ENCODE measurements at regions of chr17 and their contacts with region 1.

Region 1: DNA sequence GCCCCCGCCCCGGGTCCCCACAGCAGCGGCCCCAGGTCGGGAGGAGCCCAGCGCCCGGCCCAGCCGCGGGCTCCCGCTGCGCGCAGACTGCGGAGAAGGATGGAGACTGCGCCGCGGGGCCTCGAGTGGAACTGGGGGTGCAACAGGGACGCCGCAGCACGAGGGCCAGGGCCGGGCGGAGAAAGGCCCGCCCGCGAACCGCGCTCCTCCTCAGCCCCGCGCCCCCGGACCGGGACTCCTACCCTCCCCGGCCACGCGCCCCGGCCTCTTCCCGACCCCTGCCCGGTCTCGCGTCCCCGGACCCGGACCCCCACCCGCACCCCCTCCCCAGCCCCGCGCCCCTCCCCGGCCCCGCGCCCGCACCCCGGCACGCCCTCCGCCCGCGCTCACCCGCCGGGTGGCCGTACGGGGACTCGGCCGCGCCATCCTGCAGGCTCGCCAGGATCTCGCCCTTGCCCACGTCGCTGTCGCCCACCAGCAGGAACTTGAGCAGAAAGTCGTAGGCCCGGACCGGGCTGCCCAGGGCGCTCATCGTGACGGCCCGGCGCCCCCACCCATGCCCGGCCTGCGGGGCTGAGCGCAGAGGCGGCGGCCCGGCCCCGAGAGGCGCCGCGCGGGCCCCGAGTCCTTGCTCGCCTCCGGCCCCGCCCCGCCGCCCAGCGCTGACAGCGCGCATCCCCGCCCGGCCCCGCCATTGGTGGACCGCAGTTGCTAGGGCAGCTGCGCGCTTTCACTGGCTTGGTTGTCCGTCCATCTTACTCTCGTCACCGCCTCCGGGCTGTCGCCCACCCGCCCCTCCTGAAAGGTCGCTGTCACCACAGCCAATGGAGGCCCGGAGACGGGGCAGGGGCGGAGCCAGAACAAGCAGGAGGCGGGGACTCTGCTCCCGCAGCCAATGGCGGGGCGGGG is at the start of gene RAB40B:
- DNase-seq: peak; percentile 99
- H3K4me3 ChIP-seq: peak within 1 kb of the TSS; percentile 12 to 57
- H3K4me3 Mint-ChIP-seq: peak within 1 kb of the TSS; percentile 84 to 96 (median 90)
- H3K27ac ChIP-seq: peak within 1 kb of the TSS; percentile 6
- H3K27ac Mint-ChIP-seq: peak within 1 kb of the TSS; percentile 20 to 95 (median 77)
- H3K4me1 ChIP-seq: peaks cover 13% of the 10 kb centered on the region
- H3K4me1 Mint-ChIP-seq: peaks cover 4 to 15% (median 10%) of the 10 kb centered on the region in 4 donors
- H3K27me3 ChIP-seq: no peaks in the 10 kb centered on the region
- H3K27me3 Mint-ChIP-seq: no peaks in the 10 kb centered on the region
- total RNA-seq, gene RAB40B: 5.1 to 5.8 TPM

Region 2: GRCh38 chr17:82434216-82434565 is 264.1 kb before region 1 on chr17:
- CTCF ChIA-PET with region 1: no interaction called
- POLR2A ChIA-PET with region 1: no interaction called
- intact Hi-C with region 1: no loop called
- DNase-seq: peak in 1 of 5 donors; percentile 25
- H3K4me3 ChIP-seq: no peak overlapping the region
- H3K4me3 Mint-ChIP-seq: peak overlapping the region in 1 of 8 donors; percentile 22
- H3K27ac ChIP-seq: no peak overlapping the region
- H3K27ac Mint-ChIP-seq: peak overlapping the region in 2 of 7 donors; percentile 18 to 29
- H3K4me1 ChIP-seq: peaks cover 13% of the 10 kb centered on the region
- H3K4me1 Mint-ChIP-seq: peaks cover 8 to 26% (median 12%) of the 10 kb centered on the region in 4 donors
- H3K27me3 ChIP-seq: no peaks in the 10 kb centered on the region
- H3K27me3 Mint-ChIP-seq: no peaks in the 10 kb centered on the region

Region 3: DNA sequence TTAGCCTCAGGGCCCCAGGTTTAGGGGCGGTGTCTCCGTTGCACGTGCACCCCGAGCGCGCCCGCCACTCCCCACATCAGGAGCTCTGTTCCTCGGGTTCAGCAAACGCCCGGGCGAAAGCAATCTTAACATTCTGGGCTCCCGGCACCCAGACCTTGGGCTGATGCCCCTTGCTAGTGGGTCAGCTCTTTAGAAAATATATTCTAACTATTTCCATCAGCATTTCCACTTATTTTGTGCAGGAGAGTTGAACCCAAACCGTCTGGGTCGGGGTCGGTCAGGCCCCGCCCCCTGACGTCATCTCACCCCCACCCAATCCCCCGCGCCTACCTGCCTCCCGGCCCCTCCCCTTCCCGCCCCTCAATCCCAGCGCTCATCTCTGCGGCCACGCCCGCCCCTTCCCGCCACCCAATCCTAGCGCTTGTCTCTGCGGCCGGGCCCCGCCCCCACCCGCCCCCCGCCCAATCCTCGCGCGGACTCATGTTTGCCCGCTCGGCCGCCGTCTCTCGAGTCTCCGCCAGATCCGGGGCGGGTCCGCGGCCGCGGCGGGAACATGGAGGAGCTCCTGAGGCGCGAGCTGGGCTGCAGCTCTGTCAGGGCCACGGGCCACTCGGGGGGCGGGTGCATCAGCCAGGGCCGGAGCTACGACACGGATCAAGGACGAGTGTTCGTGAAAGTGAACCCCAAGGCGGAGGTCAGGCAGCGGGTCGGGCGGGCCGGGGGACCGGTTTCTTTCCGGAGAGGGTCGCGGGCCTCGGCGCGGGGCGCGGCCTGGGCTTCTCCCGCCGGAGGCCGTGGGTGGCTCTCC is 18.1 kb after region 1 on chr17 and contains the start of gene FN3KRP:
- CTCF ChIA-PET with region 1: no interaction called
- POLR2A ChIA-PET with region 1: interaction called, 5 read pairs
- intact Hi-C with region 1: loop called (anchors 1 kb)
- DNase-seq: peak; percentile 84 to 89 (median 87)
- H3K4me3 ChIP-seq: peak within 1 kb of the TSS; percentile 44 to 74
- H3K4me3 Mint-ChIP-seq: peak within 1 kb of the TSS; percentile 92 to 98 (median 96)
- H3K27ac ChIP-seq: peak within 1 kb of the TSS; percentile 66
- H3K27ac Mint-ChIP-seq: peak within 1 kb of the TSS; percentile 83 to 98 (median 95)
- H3K4me1 ChIP-seq: peaks cover 22% of the 10 kb centered on the region
- H3K4me1 Mint-ChIP-seq: peaks cover 11 to 33% (median 22%) of the 10 kb centered on the region in 4 donors
- H3K27me3 ChIP-seq: no peaks in the 10 kb centered on the region
- H3K27me3 Mint-ChIP-seq: peaks cover 0 to 1% of the 10 kb centered on the region in 2 donors
- total RNA-seq, gene FN3KRP: 36.6 to 37.6 TPM

Measured in CD4-positive, alpha-beta memory T cell (primary cell).